Transverse colon (tissue), 4 donors: ENCODE measurements at regions of chr5 and their contacts with region 1.

Region 1: GRCh38 chr5:146306838-146307237 is 31.8 kb upstream of the POU4F3 start:
- DNase-seq: no peak
- H3K4me3 ChIP-seq: no peak overlapping the region
- H3K27ac ChIP-seq: no peak overlapping the region
- H3K4me1 ChIP-seq: no peaks in the 10 kb centered on the region
- H3K27me3 ChIP-seq: peaks cover 8% of the 10 kb centered on the region
- CTCF ChIP-seq: no peak
- EP300 ChIP-seq: no peak
- POLR2A ChIP-seq: no peak

Region 2: GRCh38 chr5:146249801-146250200 is 57.0 kb before region 1 on chr5:
- in situ Hi-C with region 1: no loop called
- intact Hi-C with region 1: no loop called
- DNase-seq: no peak
- H3K4me3 ChIP-seq: no peak overlapping the region
- H3K27ac ChIP-seq: no peak overlapping the region
- H3K4me1 ChIP-seq: no peaks in the 10 kb centered on the region
- H3K27me3 ChIP-seq: no peaks in the 10 kb centered on the region
- CTCF ChIP-seq: no peak
- EP300 ChIP-seq: no peak
- POLR2A ChIP-seq: no peak

Region 3: DNA sequence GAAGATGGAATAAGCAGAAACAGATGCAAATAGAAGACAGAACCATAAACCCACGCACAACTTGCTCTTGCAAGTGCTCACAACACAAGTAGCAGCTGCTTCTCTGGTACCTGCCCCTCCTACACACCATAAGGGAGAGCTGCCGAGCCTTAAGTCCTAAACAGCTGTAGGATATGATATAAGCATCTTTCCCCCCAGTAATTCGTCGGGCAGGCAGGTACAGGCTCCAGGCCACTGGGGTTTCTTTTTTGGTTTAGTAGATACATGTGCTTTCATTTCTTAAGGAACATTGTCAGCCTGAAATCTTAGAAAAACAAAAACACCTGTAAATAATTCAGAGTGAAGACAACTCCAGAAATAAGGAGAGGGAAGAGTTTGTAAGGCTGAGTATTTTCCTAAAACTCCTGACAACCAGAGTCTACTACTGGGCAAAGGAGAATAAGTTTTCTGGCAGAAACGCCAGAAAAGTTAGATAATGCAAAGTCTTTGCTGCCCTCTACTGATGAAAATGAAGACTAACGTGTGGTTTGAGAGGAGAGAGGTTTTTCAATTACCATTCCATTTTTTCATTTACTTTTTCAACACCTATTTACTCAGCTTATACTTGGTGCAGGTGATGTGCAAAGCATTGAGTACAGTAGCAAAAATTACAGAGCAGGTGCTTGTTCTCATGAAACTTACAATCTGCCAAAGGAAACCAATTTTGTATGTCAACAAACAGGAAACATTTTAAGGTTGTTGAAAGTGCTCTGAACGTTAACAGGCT is 120.2 kb after region 1 on chr5:
- in situ Hi-C with region 1: no loop called
- intact Hi-C with region 1: loop called (anchors 10 kb)
- DNase-seq: no peak
- H3K4me3 ChIP-seq: no peak overlapping the region
- H3K27ac ChIP-seq: no peak overlapping the region
- H3K4me1 ChIP-seq: peaks cover 0 to 16% (median 0%) of the 10 kb centered on the region in 4 donors
- H3K27me3 ChIP-seq: peaks cover 23% of the 10 kb centered on the region
- CTCF ChIP-seq: peak; percentile 57 to 68 (median 64)
- EP300 ChIP-seq: no peak
- POLR2A ChIP-seq: no peak

Region 4: GRCh38 chr5:146484714-146485391 is 178.0 kb after region 1 on chr5:
- in situ Hi-C with region 1: no loop called
- intact Hi-C with region 1: no loop called
- DNase-seq: no peak
- H3K4me3 ChIP-seq: no peak overlapping the region
- H3K27ac ChIP-seq: no peak overlapping the region
- H3K4me1 ChIP-seq: peaks cover 0 to 10% (median 0%) of the 10 kb centered on the region in 4 donors
- H3K27me3 ChIP-seq: no peaks in the 10 kb centered on the region
- CTCF ChIP-seq: no peak
- EP300 ChIP-seq: no peak
- POLR2A ChIP-seq: no peak